Panc1 (cell line): ENCODE measurements at regions of chr14 and their contacts with region 1.

Region 1: GRCh38 chr14:26394150-26394810 is 203.6 kb downstream of the NOVA1 start:
- DNase-seq: peak; percentile 12
- ATAC-seq: no peak
- H3K4me3 ChIP-seq: no peak overlapping the region
- H3K27ac ChIP-seq: no peak overlapping the region
- H3K4me1 ChIP-seq: no peaks in the 10 kb centered on the region; the same call in 1 of the 2 replicates
- H3K27me3 ChIP-seq: no peaks in the 10 kb centered on the region
- CTCF ChIP-seq: peak; percentile 18; the same call in 1 of the 2 replicates

Region 2: DNA sequence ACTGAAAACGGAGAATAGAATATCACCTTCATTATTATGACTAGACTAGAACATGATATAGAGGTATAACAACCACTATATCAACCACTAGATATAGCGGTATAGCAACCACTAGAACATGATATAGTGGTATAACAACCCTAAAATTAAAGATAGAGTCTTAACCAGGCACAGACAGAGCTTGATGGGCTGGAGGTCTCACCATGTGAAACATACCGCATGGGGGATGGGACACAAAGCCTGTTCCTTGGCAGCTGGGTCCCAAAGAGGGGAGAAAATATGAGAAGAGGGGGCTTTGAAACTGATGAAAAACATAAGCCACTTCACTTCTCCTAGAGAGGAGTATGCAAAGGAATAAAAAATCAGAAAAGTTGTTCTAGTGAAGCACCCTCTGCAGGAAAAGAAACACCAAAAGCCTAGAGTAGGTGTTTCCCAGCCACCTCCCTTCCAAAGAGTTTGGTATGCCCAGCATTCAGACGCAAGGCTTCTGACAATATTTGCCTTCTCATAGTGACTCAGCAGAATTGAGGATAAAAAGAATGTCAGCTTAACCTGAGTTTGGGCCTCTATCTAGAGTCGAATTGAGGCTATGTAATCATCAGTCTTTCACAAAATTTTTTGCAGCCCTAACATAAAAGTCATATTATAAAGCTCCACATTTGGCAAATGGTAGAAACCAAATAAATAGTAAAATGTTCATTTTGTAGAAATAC is 112.8 kb before region 1 on chr14:
- CTCF ChIA-PET with region 1: no interaction called
- POLR2A ChIA-PET with region 1: no interaction called
- in situ Hi-C with region 1: no loop called
- intact Hi-C with region 1: no loop called
- DNase-seq: no peak
- ATAC-seq: no peak
- H3K4me3 ChIP-seq: no peak overlapping the region
- H3K27ac ChIP-seq: no peak overlapping the region
- H3K4me1 ChIP-seq: no peaks in the 10 kb centered on the region
- H3K27me3 ChIP-seq: no peaks in the 10 kb centered on the region
- CTCF ChIP-seq: no peak

Region 3: GRCh38 chr14:26966908-26967307 is 572.6 kb after region 1 on chr14:
- CTCF ChIA-PET with region 1: interaction called, 17 read pairs
- POLR2A ChIA-PET with region 1: no interaction called
- in situ Hi-C with region 1: no loop called
- intact Hi-C with region 1: no loop called
- DNase-seq: peak; percentile 10
- ATAC-seq: no peak
- H3K4me3 ChIP-seq: no peak overlapping the region
- H3K27ac ChIP-seq: no peak overlapping the region
- H3K4me1 ChIP-seq: no peaks in the 10 kb centered on the region
- H3K27me3 ChIP-seq: no peaks in the 10 kb centered on the region
- CTCF ChIP-seq: no peak